CD14-positive monocyte (primary cell): ENCODE measurements at regions of chr15 and their contacts with region 1.

Region 1: GRCh38 chr15:99704444-99704838 is 28.8 kb downstream of the LYSMD4 start:
- DNase-seq: peak; percentile 64 to 84 (median 77)
- H3K4me3 ChIP-seq: no peak overlapping the region
- H3K4me3 Mint-ChIP-seq: no peak overlapping the region
- H3K27ac ChIP-seq: no peak overlapping the region
- H3K27ac Mint-ChIP-seq: peak overlapping the region in 5 of 7 donors; percentile 49 to 88 (median 78)
- H3K4me1 ChIP-seq: peaks cover 11 to 16% of the 10 kb centered on the region in 2 donors
- H3K4me1 Mint-ChIP-seq: peaks cover 19% of the 10 kb centered on the region
- H3K27me3 ChIP-seq: no peaks in the 10 kb centered on the region
- H3K27me3 Mint-ChIP-seq: no peaks in the 10 kb centered on the region
- CTCF ChIP-seq: peak; percentile 69

Region 2: DNA sequence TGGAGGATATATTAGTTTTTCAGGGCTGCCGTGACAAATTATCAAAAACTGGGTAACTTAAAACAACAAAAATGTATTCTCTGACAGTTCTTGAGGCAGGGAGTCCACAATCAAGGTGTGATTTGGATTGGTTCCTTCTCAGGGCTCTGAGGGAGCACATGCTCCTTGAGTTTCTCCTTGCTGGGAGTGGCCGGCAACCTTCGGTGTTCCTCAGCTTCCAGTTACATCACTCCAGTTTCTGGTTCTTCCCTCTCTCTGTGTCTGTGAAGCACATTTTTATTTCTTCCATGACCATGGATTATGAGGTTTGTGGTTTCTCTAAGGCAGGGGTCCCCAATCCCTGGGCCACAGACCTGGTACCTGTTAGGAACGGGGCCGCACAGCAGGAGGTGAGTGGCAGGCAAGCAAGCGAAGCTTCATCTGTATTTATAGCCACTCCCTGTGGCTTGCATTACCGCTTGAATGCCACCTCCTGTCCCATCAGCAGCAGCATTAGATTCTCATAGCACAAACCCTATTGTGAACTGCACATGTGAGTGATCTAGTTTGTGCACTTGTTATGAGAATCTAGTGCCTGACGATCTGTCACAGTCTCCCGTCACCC is 428.8 kb before region 1 on chr15:
- intact Hi-C with region 1: loop called (anchors 5 to 10 kb)
- DNase-seq: no peak
- H3K4me3 ChIP-seq: no peak overlapping the region
- H3K4me3 Mint-ChIP-seq: no peak overlapping the region
- H3K27ac ChIP-seq: no peak overlapping the region
- H3K27ac Mint-ChIP-seq: peak overlapping the region in 1 of 7 donors; percentile 50
- H3K4me1 ChIP-seq: no peaks in the 10 kb centered on the region
- H3K4me1 Mint-ChIP-seq: peaks cover 4% of the 10 kb centered on the region
- H3K27me3 ChIP-seq: no peaks in the 10 kb centered on the region
- H3K27me3 Mint-ChIP-seq: peaks cover 0 to 2% (median 0%) of the 10 kb centered on the region in 3 donors
- CTCF ChIP-seq: no peak

Region 3: GRCh38 chr15:99282121-99282520 is 422.3 kb before region 1 on chr15:
- intact Hi-C with region 1: loop called (anchors 5 to 10 kb)
- DNase-seq: no peak
- H3K4me3 ChIP-seq: no peak overlapping the region
- H3K4me3 Mint-ChIP-seq: no peak overlapping the region
- H3K27ac ChIP-seq: no peak overlapping the region
- H3K27ac Mint-ChIP-seq: no peak overlapping the region
- H3K4me1 ChIP-seq: no peaks in the 10 kb centered on the region
- H3K4me1 Mint-ChIP-seq: peaks cover 7% of the 10 kb centered on the region
- H3K27me3 ChIP-seq: no peaks in the 10 kb centered on the region
- H3K27me3 Mint-ChIP-seq: peaks cover 0 to 2% (median 0%) of the 10 kb centered on the region in 3 donors
- CTCF ChIP-seq: no peak

Region 4: GRCh38 chr15:99763827-99764226 is 59.4 kb after region 1 on chr15:
- intact Hi-C with region 1: no loop called
- DNase-seq: no peak
- H3K4me3 ChIP-seq: no peak overlapping the region
- H3K4me3 Mint-ChIP-seq: no peak overlapping the region
- H3K27ac ChIP-seq: no peak overlapping the region
- H3K27ac Mint-ChIP-seq: no peak overlapping the region
- H3K4me1 ChIP-seq: no peaks in the 10 kb centered on the region
- H3K4me1 Mint-ChIP-seq: no peaks in the 10 kb centered on the region
- H3K27me3 ChIP-seq: no peaks in the 10 kb centered on the region
- H3K27me3 Mint-ChIP-seq: no peaks in the 10 kb centered on the region
- CTCF ChIP-seq: no peak